AG04450 (cell line): ENCODE measurements at regions of chr3 and their contacts with region 1.

Region 1: GRCh38 chr3:4939276-4939675 is 40.0 kb upstream of the BHLHE40 start:
- DNase-seq: no peak
- H3K4me3 ChIP-seq: no peak overlapping the region
- H3K27ac ChIP-seq: no peak overlapping the region
- H3K27me3 ChIP-seq: no peaks in the 10 kb centered on the region
- CTCF ChIP-seq: no peak

Region 2: GRCh38 chr3:4314688-4315087 is 624.6 kb before region 1 on chr3:
- CTCF ChIA-PET with region 1: no interaction called
- POLR2A ChIA-PET with region 1: interaction called, 10 read pairs
- DNase-seq: no peak
- H3K4me3 ChIP-seq: no peak overlapping the region
- H3K27ac ChIP-seq: no peak overlapping the region
- H3K27me3 ChIP-seq: no peaks in the 10 kb centered on the region
- CTCF ChIP-seq: peak; percentile 51

Region 3: GRCh38 chr3:5006755-5007202 is 67.5 kb after region 1 on chr3:
- CTCF ChIA-PET with region 1: no interaction called
- POLR2A ChIA-PET with region 1: no interaction called
- DNase-seq: no peak
- H3K4me3 ChIP-seq: no peak overlapping the region
- H3K27ac ChIP-seq: no peak overlapping the region
- H3K27me3 ChIP-seq: peaks cover 2% of the 10 kb centered on the region
- CTCF ChIP-seq: no peak

Region 4: DNA sequence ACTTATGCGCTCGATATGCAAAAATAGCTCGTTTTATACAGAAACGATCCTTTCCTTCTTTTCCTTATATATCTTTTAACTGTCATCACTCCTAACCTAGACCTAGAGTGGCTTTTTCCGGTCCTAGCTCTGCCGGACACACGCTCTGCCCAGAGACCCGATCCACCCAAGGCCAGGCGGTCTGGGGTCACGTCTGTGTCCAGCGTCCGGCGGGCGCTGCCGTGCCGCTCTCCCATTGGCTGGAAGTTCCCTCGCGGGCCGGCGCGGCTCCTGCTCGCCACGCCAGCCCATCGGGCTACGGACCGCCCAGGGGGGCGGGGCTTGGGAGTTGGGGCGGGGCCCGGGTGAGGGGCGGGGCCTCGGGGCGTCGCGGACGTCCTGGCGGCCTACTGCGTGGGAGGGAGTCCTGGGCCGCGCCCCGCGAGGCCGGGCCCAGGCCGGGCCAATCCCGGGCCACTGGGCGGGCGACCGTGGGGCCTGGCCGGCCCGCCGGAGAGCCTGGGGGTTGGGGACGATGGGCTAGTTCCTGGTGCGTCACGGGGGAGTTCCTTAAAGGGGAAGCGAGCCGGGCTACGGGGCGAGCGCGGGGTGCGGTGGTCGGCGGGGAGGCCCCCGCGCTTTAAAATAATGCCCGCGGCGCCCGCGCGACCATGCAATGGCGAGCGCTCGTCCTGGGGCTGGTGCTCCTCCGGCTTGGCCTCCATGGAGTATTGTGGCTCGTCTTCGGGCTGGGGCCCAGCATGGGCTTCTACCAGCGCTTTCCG is 248.1 kb after region 1 on chr3 and contains the start of gene EDEM1:
- CTCF ChIA-PET with region 1: no interaction called
- POLR2A ChIA-PET with region 1: no interaction called
- DNase-seq: peak; percentile 80
- H3K4me3 ChIP-seq: peak within 1 kb of the TSS; percentile 88
- H3K27ac ChIP-seq: peak within 1 kb of the TSS; percentile 80
- H3K27me3 ChIP-seq: no peaks in the 10 kb centered on the region
- CTCF ChIP-seq: no peak
- polyA plus RNA-seq, gene EDEM1: 36.0 and 42.5 TPM in 2 replicates